ENCODE measurements at regions of chr14 and their contacts with region 1.

Region 1: DNA sequence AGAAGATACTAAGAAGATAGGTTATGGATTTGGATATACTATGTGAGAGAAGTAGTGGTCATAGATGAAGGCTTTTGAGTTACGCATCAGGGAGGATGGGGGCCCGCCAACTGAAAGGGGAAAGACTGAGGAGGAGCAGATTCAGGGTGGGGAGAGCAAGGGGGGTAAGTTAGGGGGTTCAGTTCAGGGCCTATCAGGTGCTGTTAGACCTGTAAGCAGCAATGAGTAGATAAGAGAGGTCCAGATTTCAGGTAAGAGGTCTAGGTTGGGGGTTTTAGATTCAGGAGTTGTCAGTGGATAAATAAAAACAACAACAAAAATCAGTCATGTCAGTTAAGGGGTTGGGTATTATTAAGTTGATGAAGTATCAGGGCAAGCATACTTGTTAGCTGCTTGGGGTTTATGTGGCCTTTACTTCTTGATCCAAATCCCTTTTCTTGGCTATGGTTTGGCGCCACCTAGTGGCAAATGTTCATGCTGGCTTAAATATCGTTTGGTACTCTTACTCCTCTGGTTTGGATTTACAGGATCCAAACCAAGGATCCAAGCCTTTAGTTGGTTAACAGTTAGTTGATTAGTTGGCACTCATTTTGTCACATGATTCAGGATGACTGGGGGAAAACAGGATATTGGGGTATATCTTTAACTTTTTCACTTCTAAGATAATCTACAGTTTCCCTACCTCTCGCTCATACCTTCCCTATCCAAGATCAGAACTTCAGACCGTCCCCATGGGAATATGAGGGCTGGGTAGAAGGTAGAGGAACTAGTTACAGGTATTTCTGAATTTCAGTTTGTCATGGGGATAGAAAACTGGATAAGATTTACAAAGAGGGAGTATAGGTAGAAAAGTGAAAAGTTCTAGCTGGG is 65.1 kb downstream of the PCNX1 start:
- DNase-seq: peak; percentile 61 to 71
- H3K4me3 ChIP-seq: no peak overlapping the region
- H3K27ac ChIP-seq: no peak overlapping the region
- H3K4me1 ChIP-seq: no peaks in the 10 kb centered on the region
- H3K27me3 ChIP-seq: no peaks in the 10 kb centered on the region
- CTCF ChIP-seq: peak; percentile 97

Region 2: GRCh38 chr14:70086685-70087379 is 885.5 kb before region 1 on chr14:
- CTCF ChIA-PET with region 1: no interaction called
- POLR2A ChIA-PET with region 1: no interaction called
- intact Hi-C with region 1: loop called (anchors 10 kb)
- DNase-seq: peak in 1 of 2 experiments; percentile 14
- H3K4me3 ChIP-seq: no peak overlapping the region
- H3K27ac ChIP-seq: no peak overlapping the region
- H3K4me1 ChIP-seq: no peaks in the 10 kb centered on the region
- H3K27me3 ChIP-seq: peaks cover 75% of the 10 kb centered on the region
- CTCF ChIP-seq: peak; percentile 68

Region 3: GRCh38 chr14:70622111-70622712 is 350.1 kb before region 1 on chr14:
- CTCF ChIA-PET with region 1: no interaction called
- POLR2A ChIA-PET with region 1: no interaction called
- intact Hi-C with region 1: loop called (anchors 1 kb)
- DNase-seq: peak in 1 of 2 experiments; percentile 54
- H3K4me3 ChIP-seq: no peak overlapping the region
- H3K27ac ChIP-seq: no peak overlapping the region
- H3K4me1 ChIP-seq: peaks cover under 1% of the 10 kb centered on the region; the same call in 1 of the 2 replicates
- H3K27me3 ChIP-seq: no peaks in the 10 kb centered on the region
- CTCF ChIP-seq: peak; percentile 94

Region 4: DNA sequence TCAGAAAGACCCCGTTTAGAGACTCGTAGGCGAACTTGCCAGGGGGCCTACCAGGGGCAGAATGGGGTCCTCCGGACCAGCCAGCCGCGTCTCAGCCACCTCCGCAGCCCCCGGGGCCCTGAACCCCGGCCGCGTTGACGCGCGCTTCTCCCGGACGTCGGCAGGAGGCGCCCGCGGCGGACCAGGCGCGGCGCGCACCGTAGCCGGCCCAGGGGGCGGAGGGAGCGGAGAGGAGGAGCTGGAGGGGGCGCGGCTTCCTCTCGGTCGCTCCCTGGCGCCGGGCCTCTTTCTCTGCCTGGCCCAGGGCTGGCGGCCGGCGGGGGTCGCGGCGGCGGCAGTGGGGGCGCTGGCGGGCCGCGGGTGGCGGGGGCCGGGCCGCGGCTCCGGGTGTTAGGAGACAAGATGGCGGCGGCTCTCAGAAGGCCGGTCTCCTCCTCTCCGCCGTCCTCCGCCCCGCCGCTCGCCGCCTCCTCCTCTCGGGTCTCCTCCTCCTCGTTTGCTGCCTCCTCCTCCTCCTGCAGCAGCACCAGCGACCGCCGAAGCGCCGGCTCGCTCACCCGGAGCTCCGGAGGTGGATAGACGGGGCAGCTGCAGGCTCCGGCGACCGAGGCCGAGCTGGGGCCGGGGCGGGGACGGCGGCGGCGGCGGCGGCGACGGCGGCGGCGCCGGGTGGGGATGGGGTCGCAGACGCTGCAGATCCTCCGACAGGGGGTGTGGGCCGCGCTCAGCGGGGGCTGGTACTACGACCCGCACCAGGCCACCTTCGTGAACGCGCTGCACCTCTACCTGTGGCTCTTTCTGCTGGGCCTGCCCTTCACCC is 65.0 kb before region 1 on chr14 and contains the start of gene PCNX1:
- CTCF ChIA-PET with region 1: interaction called, 5 read pairs
- POLR2A ChIA-PET with region 1: no interaction called
- intact Hi-C with region 1: loop called (anchors 1 kb)
- DNase-seq: peak; percentile 73 to 91
- H3K4me3 ChIP-seq: peak within 1 kb of the TSS; percentile 68
- H3K27ac ChIP-seq: peak within 1 kb of the TSS; percentile 68
- H3K4me1 ChIP-seq: peaks cover 15% of the 10 kb centered on the region
- H3K27me3 ChIP-seq: no peaks in the 10 kb centered on the region
- CTCF ChIP-seq: peak; percentile 77
- total RNA-seq, gene PCNX1: 37.6 and 67.8 TPM in 2 replicates